GM12878 (cell line): ENCODE measurements at regions of chr6 and their contacts with region 1.

Region 1: GRCh38 chr6:75748743-75749501 is at the start of gene MYO6:
- DNase-seq: no peak
- ATAC-seq: peak; percentile 81
- H3K4me3 ChIP-seq: peak within 1 kb of the TSS; percentile 93
- H3K27ac ChIP-seq: peak within 1 kb of the TSS; percentile 53
- H3K4me1 ChIP-seq: peaks cover 6% of the 10 kb centered on the region
- H3K27me3 ChIP-seq: no peaks in the 10 kb centered on the region
- CTCF ChIP-seq: no peak
- EP300 ChIP-seq: no peak
- POLR2A ChIP-seq: peak; percentile 85
- RAD21 ChIP-seq: no peak
- polyA plus RNA-seq, gene MYO6: 7.9 to 8.0 TPM

Region 2: GRCh38 chr6:75601304-75602245 is 147.3 kb before region 1 on chr6 and contains the start of gene SENP6:
- CTCF ChIA-PET with region 1: no interaction called
- POLR2A ChIA-PET with region 1: no interaction called
- RAD21 ChIA-PET with region 1: interaction called, 3 read pairs
- SMC1A ChIA-PET with region 1: interaction called, 3 read pairs
- in situ Hi-C with region 1: no loop called
- intact Hi-C with region 1: loop called (anchors 5 kb)
- DNase-seq: no peak
- ATAC-seq: peak; percentile 83
- H3K4me3 ChIP-seq: peak within 1 kb of the TSS; percentile 86
- H3K27ac ChIP-seq: peak within 1 kb of the TSS; percentile 89
- H3K4me1 ChIP-seq: no peaks in the 10 kb centered on the region
- H3K27me3 ChIP-seq: no peaks in the 10 kb centered on the region
- CTCF ChIP-seq: no peak
- EP300 ChIP-seq: no peak
- POLR2A ChIP-seq: peak; percentile 96
- RAD21 ChIP-seq: no peak
- polyA plus RNA-seq, gene SENP6: 10.7 to 17.2 TPM

Region 3: DNA sequence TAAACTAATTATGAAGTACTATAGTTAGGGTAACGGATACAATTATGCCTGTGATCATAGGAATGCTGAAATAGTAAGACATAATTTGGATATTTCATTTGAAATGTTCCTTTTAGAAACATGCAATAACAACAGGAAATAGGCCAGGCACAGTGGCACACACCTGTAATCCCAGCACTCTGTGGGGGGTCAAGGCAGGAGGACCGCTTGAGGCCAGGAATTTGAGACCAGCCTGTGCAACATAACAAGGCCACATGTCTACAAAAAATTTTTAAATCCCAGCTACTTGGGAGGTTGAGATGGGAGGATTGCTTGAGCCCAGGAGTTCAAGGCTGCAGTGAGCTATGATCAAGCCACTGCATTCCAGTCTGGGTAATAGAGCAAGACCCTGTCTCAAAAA is 25.5 kb before region 1 on chr6:
- CTCF ChIA-PET with region 1: no interaction called
- POLR2A ChIA-PET with region 1: no interaction called
- RAD21 ChIA-PET with region 1: no interaction called
- SMC1A ChIA-PET with region 1: no interaction called
- in situ Hi-C with region 1: no loop called
- intact Hi-C with region 1: no loop called
- DNase-seq: no peak
- ATAC-seq: no peak
- H3K4me3 ChIP-seq: no peak overlapping the region
- H3K27ac ChIP-seq: no peak overlapping the region
- H3K4me1 ChIP-seq: no peaks in the 10 kb centered on the region
- H3K27me3 ChIP-seq: no peaks in the 10 kb centered on the region
- CTCF ChIP-seq: no peak
- EP300 ChIP-seq: no peak
- POLR2A ChIP-seq: no peak
- RAD21 ChIP-seq: no peak

Region 4: DNA sequence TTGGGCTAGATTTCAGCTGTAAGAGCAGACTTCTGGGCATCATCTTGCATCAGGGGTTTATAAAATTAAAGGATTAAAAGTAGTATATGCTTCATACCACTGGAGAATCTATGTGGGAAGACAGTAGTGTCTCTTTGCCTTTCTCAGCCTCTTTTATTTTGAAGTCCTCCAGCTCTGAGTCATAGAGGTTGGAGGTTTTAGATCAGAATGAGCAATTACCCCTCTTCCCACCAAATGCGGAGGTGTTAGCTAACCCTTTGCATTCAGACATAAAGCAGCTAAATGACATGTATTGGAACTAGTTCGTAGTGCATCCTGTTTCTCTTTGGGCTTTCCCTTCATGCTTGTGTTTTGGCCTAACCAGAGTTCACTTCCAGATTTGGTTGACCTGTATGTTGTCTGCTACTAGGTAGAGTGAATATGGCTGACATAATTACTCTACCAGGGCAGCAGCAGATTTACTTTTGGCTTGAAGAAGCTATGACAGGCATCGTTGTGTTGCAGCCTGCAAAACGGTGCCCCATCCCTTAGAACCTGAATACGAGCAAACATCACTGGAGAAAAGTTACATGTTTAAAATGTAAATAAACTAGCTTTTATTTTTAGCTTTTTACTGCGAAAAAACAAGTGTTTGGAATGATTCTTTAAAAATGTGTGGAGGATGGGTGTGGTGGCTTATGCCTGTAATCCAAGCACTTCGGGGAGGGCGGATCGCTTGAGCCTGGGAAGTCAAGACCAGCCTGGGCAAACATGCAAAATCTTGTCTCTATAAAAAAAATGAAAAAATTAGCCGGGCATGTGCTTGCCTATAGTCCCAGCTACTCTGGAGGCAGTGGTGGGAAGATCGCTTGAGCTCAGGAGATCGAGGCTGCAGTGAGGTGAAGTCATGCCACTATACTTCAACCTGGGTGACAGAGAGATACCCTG is 82.3 kb after region 1 on chr6:
- CTCF ChIA-PET with region 1: no interaction called
- POLR2A ChIA-PET with region 1: interaction called, 3 read pairs
- RAD21 ChIA-PET with region 1: interaction called, 3 read pairs
- SMC1A ChIA-PET with region 1: interaction called, 17 read pairs
- in situ Hi-C with region 1: no loop called
- intact Hi-C with region 1: no loop called
- DNase-seq: peak; percentile 30
- ATAC-seq: peak; percentile 94
- H3K4me3 ChIP-seq: no peak overlapping the region
- H3K27ac ChIP-seq: no peak overlapping the region
- H3K4me1 ChIP-seq: no peaks in the 10 kb centered on the region
- H3K27me3 ChIP-seq: no peaks in the 10 kb centered on the region
- CTCF ChIP-seq: no peak
- EP300 ChIP-seq: peak in 1 of 2 experiments; percentile 29; a peak in 1 of 4 replicates
- POLR2A ChIP-seq: no peak
- RAD21 ChIP-seq: 0 out of 2 replicates have a peak, but pooled peaks have one; percentile 7